ENCODE measurements at regions of chr17 and their contacts with region 1.

Region 1: DNA sequence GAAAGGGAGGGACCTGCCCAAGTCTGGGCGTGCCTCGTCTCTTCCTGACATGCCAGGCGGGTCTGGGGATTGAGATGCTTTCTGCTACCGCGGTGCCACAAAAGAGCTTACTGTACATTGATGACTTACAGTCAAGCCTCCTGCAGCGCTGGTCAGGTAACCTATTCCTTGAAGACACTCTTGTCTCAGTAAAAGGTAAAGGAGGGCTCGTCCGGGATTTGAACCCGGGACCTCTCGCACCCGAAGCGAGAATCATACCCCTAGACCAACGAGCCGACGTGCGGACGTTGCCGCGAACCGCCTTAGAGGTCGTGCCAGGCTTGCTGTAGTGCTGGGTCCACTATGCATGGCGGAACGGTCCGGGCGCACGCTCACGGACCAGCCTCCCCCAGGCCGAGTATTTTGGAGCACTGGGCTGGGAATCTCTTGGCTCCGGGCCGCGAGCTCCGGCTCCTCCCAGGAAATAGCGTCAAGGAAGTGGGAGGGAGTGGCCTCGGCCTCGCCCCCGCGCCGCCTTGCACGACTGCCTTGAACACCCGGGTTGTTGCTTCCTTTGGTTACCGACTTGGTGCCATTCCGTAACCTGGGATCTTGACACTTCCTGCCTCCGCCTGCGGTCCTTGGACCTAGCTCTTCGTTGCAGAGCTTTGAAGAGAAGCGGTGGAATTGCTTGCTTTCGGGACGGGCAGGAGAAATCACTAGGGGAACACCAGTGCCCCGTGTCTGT is 12.4 kb upstream of the AURKB start:
- DNase-seq: peak; percentile 99

Region 2: DNA sequence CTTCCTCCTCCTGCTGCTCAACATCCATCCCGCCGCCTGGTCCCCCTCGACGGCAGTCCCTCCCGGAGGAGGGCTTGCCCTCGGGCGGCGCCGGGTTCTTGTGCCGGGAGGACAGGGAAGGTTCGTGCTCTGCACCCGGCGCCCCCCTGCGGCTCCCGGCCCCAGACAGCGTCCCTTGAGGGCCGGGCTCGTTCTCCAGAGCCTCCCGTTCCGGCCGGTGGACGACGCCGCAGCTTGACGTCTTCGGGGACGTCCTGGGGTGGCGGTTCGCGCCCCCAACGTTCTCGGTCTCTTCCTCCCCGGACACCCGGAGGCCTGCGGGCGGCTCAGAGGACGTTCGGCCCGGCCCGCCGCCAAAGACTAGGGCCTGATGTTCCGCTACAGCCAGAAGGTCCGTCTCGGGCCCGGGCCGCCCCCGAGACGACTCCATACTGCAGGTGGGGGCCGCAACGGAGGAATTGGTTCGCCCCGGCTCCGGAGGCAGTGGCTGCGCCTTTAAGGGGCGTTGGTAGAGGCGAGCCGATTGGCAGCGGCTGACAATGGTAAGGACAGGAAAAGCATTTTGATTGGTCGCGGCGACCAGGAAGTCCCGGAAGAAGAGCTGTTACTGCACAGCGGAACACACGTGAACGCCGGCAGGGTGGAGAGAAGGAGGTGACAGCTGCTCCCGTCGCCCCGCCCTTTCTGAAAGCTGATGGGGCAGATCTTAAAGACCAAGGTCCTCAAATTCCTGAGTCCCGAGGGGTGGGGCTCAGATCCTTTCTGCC is 32.9 kb before region 1 on chr17 and contains the start of gene BORCS6:
- intact Hi-C with region 1: loop called (anchors 5 kb)
- DNase-seq: peak; percentile 99
- total RNA-seq, gene BORCS6: 4.5 to 5.6 TPM

Region 3: GRCh38 chr17:8209909-8210760 is 12.7 kb before region 1 on chr17 and contains the start of gene AURKB:
- intact Hi-C with region 1: no loop called
- DNase-seq: peak; percentile 97
- total RNA-seq, gene AURKB: 0.69 TPM in 1 of 2 donors, not detected in the other

Region 4: GRCh38 chr17:8234361-8235270 is 11.8 kb after region 1 on chr17:
- intact Hi-C with region 1: loop called in 1 of 2 experiments (anchors 2 kb)
- DNase-seq: no peak

Region 5: GRCh38 chr17:8256291-8256690 is 33.5 kb after region 1 on chr17:
- intact Hi-C with region 1: loop called in 1 of 2 experiments (anchors 1 kb)
- DNase-seq: no peak

Measured in posterior vena cava (tissue), 2 donors.